ENCODE measurements at regions of chr7 and their contacts with region 1.

Region 1: GRCh38 chr7:55964261-55965099 is at the start of gene NIPSNAP2:
- DNase-seq: peak; percentile 24 to 81 (median 56)
- ATAC-seq: peak; percentile 93
- H3K4me3 ChIP-seq: peak within 1 kb of the TSS; percentile 59 to 63
- H3K4me3 Mint-ChIP-seq: peak within 1 kb of the TSS; percentile 87
- H3K27ac ChIP-seq: peak within 1 kb of the TSS; percentile 64 to 85
- H3K27ac Mint-ChIP-seq: peak within 1 kb of the TSS; percentile 93
- H3K4me1 ChIP-seq: peaks cover 15% of the 10 kb centered on the region
- H3K4me1 Mint-ChIP-seq: peaks cover 42% of the 10 kb centered on the region
- H3K27me3 ChIP-seq: no peaks in the 10 kb centered on the region
- H3K27me3 Mint-ChIP-seq: no peaks in the 10 kb centered on the region
- CTCF ChIP-seq: peak; percentile 45
- total RNA-seq, gene NIPSNAP2: 36.5 to 38.9 TPM

Region 2: GRCh38 chr7:55432939-55433784 is 531.3 kb before region 1 on chr7:
- CTCF ChIA-PET with region 1: no interaction called
- POLR2A ChIA-PET with region 1: no interaction called
- intact Hi-C with region 1: loop called in 1 of 2 experiments (anchors 5 kb)
- DNase-seq: peak in 2 of 9 experiments; percentile 41 to 53
- ATAC-seq: peak; percentile 71
- H3K4me3 ChIP-seq: no peak overlapping the region
- H3K4me3 Mint-ChIP-seq: no peak overlapping the region
- H3K27ac ChIP-seq: no peak overlapping the region
- H3K27ac Mint-ChIP-seq: no peak overlapping the region
- H3K4me1 ChIP-seq: peaks cover 14% of the 10 kb centered on the region
- H3K4me1 Mint-ChIP-seq: peaks cover 31% of the 10 kb centered on the region
- H3K27me3 ChIP-seq: no peaks in the 10 kb centered on the region
- H3K27me3 Mint-ChIP-seq: no peaks in the 10 kb centered on the region
- CTCF ChIP-seq: peak; percentile 67

Region 3: GRCh38 chr7:55641273-55641691 is 323.2 kb before region 1 on chr7:
- CTCF ChIA-PET with region 1: interaction called, 11 read pairs
- POLR2A ChIA-PET with region 1: no interaction called
- intact Hi-C with region 1: loop called in 1 of 2 experiments (anchors 1 kb)
- DNase-seq: peak in 8 of 9 experiments; percentile 6 to 78 (median 30)
- ATAC-seq: peak; percentile 76
- H3K4me3 ChIP-seq: no peak overlapping the region
- H3K4me3 Mint-ChIP-seq: no peak overlapping the region
- H3K27ac ChIP-seq: no peak overlapping the region
- H3K27ac Mint-ChIP-seq: no peak overlapping the region
- H3K4me1 ChIP-seq: peaks cover 9% of the 10 kb centered on the region
- H3K4me1 Mint-ChIP-seq: peaks cover 10% of the 10 kb centered on the region
- H3K27me3 ChIP-seq: no peaks in the 10 kb centered on the region
- H3K27me3 Mint-ChIP-seq: peaks cover 2% of the 10 kb centered on the region
- CTCF ChIP-seq: peak; percentile 83

Region 4: DNA sequence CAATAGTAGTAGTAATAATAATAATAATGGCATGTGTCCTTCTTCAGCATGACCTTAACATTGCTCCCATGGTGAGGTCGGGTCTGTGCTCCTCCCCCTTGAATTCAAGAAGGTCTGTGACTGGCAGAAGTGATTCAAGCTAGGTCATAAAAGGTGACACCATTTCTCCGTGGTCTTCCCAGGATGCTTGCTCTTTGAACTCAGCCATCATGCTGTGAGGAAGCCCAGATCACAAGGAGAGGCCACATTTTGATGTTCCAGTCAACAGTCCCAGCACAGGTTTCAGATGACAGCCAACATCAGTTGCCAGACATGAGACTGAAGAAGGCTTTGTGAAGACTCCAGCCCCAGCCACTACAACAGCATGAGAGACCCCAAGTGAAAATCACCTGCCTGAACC is 185.8 kb before region 1 on chr7:
- CTCF ChIA-PET with region 1: no interaction called
- POLR2A ChIA-PET with region 1: no interaction called
- intact Hi-C with region 1: no loop called
- DNase-seq: no peak
- ATAC-seq: no peak
- H3K4me3 ChIP-seq: no peak overlapping the region
- H3K4me3 Mint-ChIP-seq: no peak overlapping the region
- H3K27ac ChIP-seq: no peak overlapping the region
- H3K27ac Mint-ChIP-seq: no peak overlapping the region
- H3K4me1 ChIP-seq: no peaks in the 10 kb centered on the region
- H3K4me1 Mint-ChIP-seq: no peaks in the 10 kb centered on the region
- H3K27me3 ChIP-seq: no peaks in the 10 kb centered on the region
- H3K27me3 Mint-ChIP-seq: no peaks in the 10 kb centered on the region
- CTCF ChIP-seq: no peak

Region 5: DNA sequence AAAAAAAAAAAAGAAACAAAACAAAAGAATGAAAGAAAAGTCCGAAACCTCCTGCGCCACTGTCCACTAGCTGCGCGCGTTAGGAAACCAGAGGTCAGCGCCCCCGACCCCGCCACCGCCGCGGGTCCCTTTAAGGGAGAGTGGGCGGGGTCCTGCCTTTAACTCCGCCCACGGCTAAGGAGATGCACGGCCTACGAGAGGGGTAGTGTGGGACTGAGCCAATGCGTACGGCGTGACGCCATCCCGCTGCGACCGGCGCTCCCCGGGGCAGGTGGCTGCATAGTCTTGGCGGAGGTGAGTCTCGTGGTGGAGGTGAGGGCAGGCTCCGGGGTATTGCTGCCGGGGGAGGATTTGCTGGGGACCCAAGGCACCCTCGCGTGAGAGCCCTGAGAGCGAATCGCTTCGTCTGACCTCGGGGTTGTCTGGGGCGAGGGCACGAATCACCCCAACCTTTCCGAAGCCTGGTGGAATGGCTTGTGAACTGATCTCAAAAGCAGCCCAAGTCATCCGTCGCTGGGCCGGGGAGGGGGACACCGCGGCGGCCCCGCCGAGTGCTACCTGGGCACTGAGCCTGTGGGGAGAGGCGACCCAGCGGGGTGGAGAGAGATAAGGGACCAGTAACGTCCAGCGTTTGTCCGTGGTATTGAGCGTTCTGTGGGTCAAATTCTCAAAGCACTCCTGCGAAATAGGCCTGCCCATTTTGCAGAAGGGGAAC is 12.7 kb before region 1 on chr7 and contains the start of gene MRPS17:
- CTCF ChIA-PET with region 1: interaction called, 8 read pairs
- POLR2A ChIA-PET with region 1: interaction called, 4 read pairs
- intact Hi-C with region 1: loop called (anchors 1 kb)
- DNase-seq: peak; percentile 82 to 96 (median 93)
- ATAC-seq: peak; percentile 99
- H3K4me3 ChIP-seq: peak within 1 kb of the TSS; percentile 71 to 86
- H3K4me3 Mint-ChIP-seq: peak within 1 kb of the TSS; percentile 94
- H3K27ac ChIP-seq: peak within 1 kb of the TSS; percentile 78 to 91
- H3K27ac Mint-ChIP-seq: peak within 1 kb of the TSS; percentile 97
- H3K4me1 ChIP-seq: peaks cover 6% of the 10 kb centered on the region
- H3K4me1 Mint-ChIP-seq: peaks cover 26% of the 10 kb centered on the region
- H3K27me3 ChIP-seq: no peaks in the 10 kb centered on the region
- H3K27me3 Mint-ChIP-seq: no peaks in the 10 kb centered on the region
- CTCF ChIP-seq: no peak
- total RNA-seq, gene MRPS17: 7.8 to 8.9 TPM

Region 6: DNA sequence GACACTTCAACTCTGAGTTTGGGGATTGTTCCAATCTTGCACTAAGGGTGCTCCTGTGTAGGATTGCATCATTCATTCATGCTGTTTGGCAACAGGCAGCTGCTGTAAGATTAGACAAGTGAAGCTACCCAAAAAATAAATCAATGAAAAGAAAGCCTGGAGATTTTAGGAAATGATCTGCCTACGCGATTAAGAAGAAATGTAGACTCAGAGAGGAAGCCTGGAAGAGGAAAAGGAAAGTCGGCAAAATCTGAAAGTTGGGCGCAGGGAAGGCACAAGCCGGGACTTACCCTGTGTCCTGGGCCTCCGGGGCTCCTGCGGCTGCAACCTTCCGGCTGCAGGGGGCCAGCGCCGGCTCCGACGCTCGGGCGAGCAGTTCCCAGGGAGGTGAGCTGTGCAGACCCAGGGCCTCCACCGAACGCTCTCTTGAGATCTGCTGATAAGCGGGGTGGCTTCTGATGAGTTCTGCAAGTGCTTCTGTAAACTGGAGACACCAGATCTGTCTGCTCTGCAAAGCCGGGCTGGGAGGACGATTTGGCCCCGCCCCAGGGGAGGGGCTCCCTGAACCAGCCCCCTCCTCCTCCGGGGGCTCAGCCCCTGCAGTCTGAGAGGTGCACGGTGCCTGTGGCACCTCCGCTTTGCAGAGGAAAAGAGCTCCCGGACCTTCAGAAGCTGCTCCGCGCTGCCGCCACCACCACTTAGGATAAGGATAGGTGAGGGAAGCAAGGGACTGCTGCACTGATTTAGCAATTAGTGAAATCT is 69.4 kb after region 1 on chr7:
- CTCF ChIA-PET with region 1: no interaction called
- POLR2A ChIA-PET with region 1: interaction called, 3 read pairs
- intact Hi-C with region 1: loop called in 1 of 2 experiments (anchors 5 kb)
- DNase-seq: peak; percentile 46 to 85 (median 73)
- ATAC-seq: peak; percentile 99
- H3K4me3 ChIP-seq: peak overlapping the region; percentile 49 to 73
- H3K4me3 Mint-ChIP-seq: peak overlapping the region; percentile 86
- H3K27ac ChIP-seq: no peak overlapping the region
- H3K27ac Mint-ChIP-seq: peak overlapping the region; percentile 72
- H3K4me1 ChIP-seq: peaks cover 3% of the 10 kb centered on the region
- H3K4me1 Mint-ChIP-seq: peaks cover 9% of the 10 kb centered on the region
- H3K27me3 ChIP-seq: no peaks in the 10 kb centered on the region
- H3K27me3 Mint-ChIP-seq: no peaks in the 10 kb centered on the region
- CTCF ChIP-seq: no peak

Region 7: DNA sequence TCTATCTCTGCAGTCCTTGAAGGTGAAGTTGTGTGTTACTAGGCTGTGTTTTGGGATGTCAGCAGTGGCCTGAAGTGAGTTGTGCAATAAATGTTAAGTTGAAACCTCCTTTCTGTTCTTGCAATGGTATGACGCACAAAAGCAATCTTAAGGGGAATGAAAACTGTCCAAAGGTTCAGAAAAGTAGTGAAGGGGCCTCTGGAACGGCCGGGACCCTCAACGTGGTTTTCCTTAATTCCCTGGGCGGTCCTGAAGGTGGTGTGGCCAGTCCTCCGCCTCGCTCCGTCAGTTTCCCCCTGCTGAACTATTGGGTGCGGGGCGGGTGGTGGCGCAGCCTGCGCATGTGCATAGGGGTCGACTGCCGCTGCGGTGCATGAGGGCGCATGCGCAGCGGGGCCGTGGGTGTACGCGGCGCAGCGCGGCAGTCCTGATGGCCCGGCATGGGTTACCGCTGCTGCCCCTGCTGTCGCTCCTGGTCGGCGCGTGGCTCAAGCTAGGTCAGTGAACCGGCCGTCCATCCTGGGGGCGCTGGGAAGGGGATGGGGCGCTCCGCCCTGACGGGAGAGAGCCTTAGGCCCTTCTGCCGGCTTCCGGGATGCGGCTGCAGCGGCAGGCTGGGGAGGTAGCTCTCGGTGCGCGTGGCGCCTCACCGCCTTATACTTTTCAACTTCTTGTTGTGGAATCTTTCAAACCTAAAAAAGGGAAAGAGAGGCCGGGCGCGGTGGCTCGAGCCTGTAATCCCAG is 99.6 kb after region 1 on chr7 and contains the start of gene SUMF2:
- CTCF ChIA-PET with region 1: interaction called, 11 read pairs
- POLR2A ChIA-PET with region 1: interaction called, 3 read pairs
- intact Hi-C with region 1: loop called in 1 of 2 experiments (anchors 5 kb)
- DNase-seq: peak; percentile 80 to 95 (median 90)
- ATAC-seq: peak; percentile 90
- H3K4me3 ChIP-seq: peak within 1 kb of the TSS; percentile 79 to 99
- H3K4me3 Mint-ChIP-seq: peak within 1 kb of the TSS; percentile 91
- H3K27ac ChIP-seq: peak within 1 kb of the TSS; percentile 86 to 88
- H3K27ac Mint-ChIP-seq: peak within 1 kb of the TSS; percentile 91
- H3K4me1 ChIP-seq: peaks cover 22% of the 10 kb centered on the region
- H3K4me1 Mint-ChIP-seq: peaks cover 28% of the 10 kb centered on the region
- H3K27me3 ChIP-seq: no peaks in the 10 kb centered on the region
- H3K27me3 Mint-ChIP-seq: no peaks in the 10 kb centered on the region
- CTCF ChIP-seq: no peak
- total RNA-seq, gene SUMF2: 97.8 to 103 TPM

Region 8: GRCh38 chr7:56483153-56483552 is 518.7 kb after region 1 on chr7:
- CTCF ChIA-PET with region 1: no interaction called
- POLR2A ChIA-PET with region 1: no interaction called
- intact Hi-C with region 1: no loop called
- DNase-seq: no peak
- ATAC-seq: no peak
- H3K4me3 ChIP-seq: no peak overlapping the region
- H3K4me3 Mint-ChIP-seq: no peak overlapping the region
- H3K27ac ChIP-seq: no peak overlapping the region
- H3K27ac Mint-ChIP-seq: no peak overlapping the region
- H3K4me1 ChIP-seq: no peaks in the 10 kb centered on the region
- H3K4me1 Mint-ChIP-seq: no peaks in the 10 kb centered on the region
- H3K27me3 ChIP-seq: no peaks in the 10 kb centered on the region
- H3K27me3 Mint-ChIP-seq: no peaks in the 10 kb centered on the region
- CTCF ChIP-seq: no peak